A549 (cell line): ENCODE measurements at regions of chr6 and their contacts with region 1.

Region 1: GRCh38 chr6:33672808-33673207 is 38.7 kb downstream of the UQCC2 start:
- DNase-seq: peak; percentile 78 to 85
- ATAC-seq: peak; percentile 85 to 90
- H3K4me3 ChIP-seq: no peak overlapping the region
- H3K27ac ChIP-seq: peak overlapping the region; percentile 73 to 92
- H3K4me1 ChIP-seq: peaks cover 78% of the 10 kb centered on the region
- CTCF ChIP-seq: peak; percentile 38; the same call in 2 of the 3 replicates
- EP300 ChIP-seq: no peak
- POLR2A ChIP-seq: no peak
- RAD21 ChIP-seq: peak; percentile 49 to 60

Region 2: DNA sequence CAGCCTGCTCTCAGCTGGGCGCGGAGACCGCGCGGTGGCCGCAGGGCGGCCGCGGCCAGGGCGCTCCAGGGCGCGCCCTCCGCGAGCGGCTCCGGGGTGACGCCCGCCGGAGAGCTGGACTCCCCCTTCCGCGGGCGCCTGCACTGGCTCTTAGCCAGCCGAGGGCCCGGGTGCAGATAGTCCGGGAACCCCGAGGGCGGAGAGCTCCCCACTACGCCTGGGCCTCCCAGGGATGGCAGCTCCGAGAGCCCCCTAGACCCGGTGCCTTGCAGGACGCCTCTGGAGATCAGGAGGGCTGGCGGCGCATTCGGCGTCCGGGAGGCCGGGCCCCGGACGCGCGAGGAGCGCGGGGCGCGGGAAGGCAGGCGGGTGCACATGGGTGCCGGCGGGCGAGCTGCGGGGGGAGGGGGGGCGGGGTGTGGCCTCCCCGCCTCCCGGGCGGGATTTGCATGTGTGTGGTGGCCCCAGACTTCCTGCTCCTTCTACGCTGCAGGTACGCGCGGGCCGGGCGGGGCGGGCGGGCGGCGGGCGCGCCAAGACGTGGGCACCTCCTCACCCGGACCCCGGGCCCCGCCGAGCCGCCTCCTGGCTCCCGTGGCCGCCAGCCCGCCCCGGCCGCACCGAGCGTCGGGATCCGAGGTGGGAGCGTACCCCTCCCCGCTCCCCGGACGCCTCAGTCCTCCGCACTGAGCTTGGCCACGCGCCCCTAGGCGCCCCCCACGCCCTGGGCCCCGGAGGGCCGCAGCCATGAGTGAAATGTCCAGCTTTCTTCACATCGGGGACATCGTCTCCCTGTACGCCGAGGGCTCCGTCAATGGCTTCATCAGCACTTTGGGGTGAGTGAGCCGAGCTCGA is 51.7 kb before region 1 on chr6 and contains the start of gene ITPR3:
- CTCF ChIA-PET with region 1: interaction called, 13 read pairs
- POLR2A ChIA-PET with region 1: no interaction called
- DNase-seq: peak; percentile 66 to 72
- ATAC-seq: peak; percentile 71 to 76
- H3K4me3 ChIP-seq: peak within 1 kb of the TSS; percentile 80
- H3K27ac ChIP-seq: peak within 1 kb of the TSS; percentile 87 to 99
- H3K4me1 ChIP-seq: peaks cover 30% of the 10 kb centered on the region
- CTCF ChIP-seq: no peak
- EP300 ChIP-seq: no peak
- POLR2A ChIP-seq: no peak; the same call in 1 of the 2 replicates
- RAD21 ChIP-seq: no peak
- polyA plus RNA-seq, gene ITPR3: 17.6 and 19.1 TPM in 2 replicates